ENCODE measurements at regions of chr16 and their contacts with region 1.

Region 1: GRCh38 chr16:21599233-21600030 is at the start of gene METTL9:
- DNase-seq: peak; percentile 97
- ATAC-seq: peak; percentile 95
- H3K4me3 Mint-ChIP-seq: peak within 1 kb of the TSS; percentile 90
- H3K27ac Mint-ChIP-seq: peak within 1 kb of the TSS; percentile 96
- H3K4me1 Mint-ChIP-seq: peaks cover 54% of the 10 kb centered on the region
- H3K27me3 Mint-ChIP-seq: no peaks in the 10 kb centered on the region
- total RNA-seq, gene METTL9: 78.3 to 98.0 TPM

Region 2: GRCh38 chr16:21574381-21574780 is 25.1 kb before region 1 on chr16:
- CTCF ChIA-PET with region 1: no interaction called
- POLR2A ChIA-PET with region 1: no interaction called
- intact Hi-C with region 1: no loop called
- DNase-seq: no peak
- ATAC-seq: no peak
- H3K4me3 Mint-ChIP-seq: no peak overlapping the region
- H3K27ac Mint-ChIP-seq: no peak overlapping the region
- H3K4me1 Mint-ChIP-seq: no peaks in the 10 kb centered on the region
- H3K27me3 Mint-ChIP-seq: peaks cover 1% of the 10 kb centered on the region

Region 3: GRCh38 chr16:21611546-21612384 is 12.3 kb after region 1 on chr16:
- CTCF ChIA-PET with region 1: interaction called, 3 read pairs
- POLR2A ChIA-PET with region 1: interaction called, 3 read pairs
- intact Hi-C with region 1: loop called in 1 of 2 experiments (anchors 1 kb)
- DNase-seq: peak; percentile 25
- ATAC-seq: peak; percentile 79
- H3K4me3 Mint-ChIP-seq: no peak overlapping the region
- H3K27ac Mint-ChIP-seq: peak overlapping the region; percentile 65
- H3K4me1 Mint-ChIP-seq: peaks cover 70% of the 10 kb centered on the region
- H3K27me3 Mint-ChIP-seq: no peaks in the 10 kb centered on the region

Region 4: GRCh38 chr16:21646721-21647561 is 47.5 kb after region 1 on chr16:
- CTCF ChIA-PET with region 1: interaction called, 7 read pairs
- POLR2A ChIA-PET with region 1: interaction called, 5 read pairs
- intact Hi-C with region 1: loop called (anchors 1 kb)
- DNase-seq: peak; percentile 89
- ATAC-seq: peak; percentile 89
- H3K4me3 Mint-ChIP-seq: peak overlapping the region; percentile 54
- H3K27ac Mint-ChIP-seq: peak overlapping the region; percentile 92
- H3K4me1 Mint-ChIP-seq: peaks cover 61% of the 10 kb centered on the region
- H3K27me3 Mint-ChIP-seq: no peaks in the 10 kb centered on the region

Region 5: DNA sequence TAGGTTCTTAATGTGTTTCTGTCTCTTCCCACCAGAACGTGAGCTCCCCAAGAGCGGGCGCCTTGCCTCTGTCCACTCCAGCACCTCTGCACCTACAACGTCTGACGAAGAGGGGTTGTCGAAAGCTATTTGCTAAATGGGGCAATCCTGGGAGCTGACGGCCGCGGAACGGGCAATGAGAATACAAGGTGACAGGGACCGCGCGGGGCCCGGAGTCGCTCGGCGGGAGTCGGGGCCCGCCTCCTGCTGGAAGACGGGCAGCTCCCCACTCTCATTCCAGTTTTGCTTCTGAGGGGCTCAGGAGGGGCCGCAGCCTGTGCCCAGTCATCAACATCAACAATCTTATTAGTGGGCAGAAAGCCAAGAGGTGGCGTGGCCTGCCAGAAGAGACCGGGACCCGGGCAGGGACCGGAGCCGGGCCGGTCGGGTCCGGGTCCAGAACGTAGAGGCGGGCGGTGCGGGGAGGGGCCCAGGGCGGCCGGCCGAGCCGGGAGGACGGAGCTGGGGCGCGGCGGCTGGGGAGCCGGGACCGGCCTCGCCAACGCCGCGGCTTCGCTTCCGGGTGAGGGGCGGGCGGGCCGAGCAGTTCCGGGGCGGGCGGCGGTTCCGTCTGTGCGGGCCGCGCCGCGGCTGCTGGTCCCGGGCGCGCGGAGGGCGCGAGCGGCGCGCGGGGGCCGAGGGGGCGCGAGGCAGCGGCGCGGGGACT is 408.2 kb after region 1 on chr16 and contains the start of gene MOSMO:
- CTCF ChIA-PET with region 1: no interaction called
- POLR2A ChIA-PET with region 1: no interaction called
- intact Hi-C with region 1: loop called in 1 of 2 experiments (anchors 2 kb)
- DNase-seq: peak; percentile 81
- ATAC-seq: peak; percentile 89
- H3K4me3 Mint-ChIP-seq: peak within 1 kb of the TSS; percentile 84
- H3K27ac Mint-ChIP-seq: peak within 1 kb of the TSS; percentile 79
- H3K4me1 Mint-ChIP-seq: peaks cover 42% of the 10 kb centered on the region
- H3K27me3 Mint-ChIP-seq: no peaks in the 10 kb centered on the region
- total RNA-seq, gene MOSMO: 7.7 to 8.0 TPM

Region 6: GRCh38 chr16:22874394-22874793 is 1275.0 kb after region 1 on chr16:
- CTCF ChIA-PET with region 1: no interaction called
- POLR2A ChIA-PET with region 1: no interaction called
- intact Hi-C with region 1: no loop called
- DNase-seq: no peak
- ATAC-seq: no peak
- H3K4me3 Mint-ChIP-seq: no peak overlapping the region
- H3K27ac Mint-ChIP-seq: no peak overlapping the region
- H3K4me1 Mint-ChIP-seq: no peaks in the 10 kb centered on the region
- H3K27me3 Mint-ChIP-seq: peaks cover 16% of the 10 kb centered on the region

Measured in activated CD4-positive, alpha-beta T cell treated with anti-CD3 and anti-CD28 coated beads for 36 hours (primary cell).